ENCODE measurements at regions of chr10 and their contacts with region 1.

Region 1: GRCh38 chr10:85532773-85533172 is 833.8 kb downstream of the GRID1 start:
- DNase-seq: no peak
- H3K4me3 ChIP-seq: no peak overlapping the region
- H3K27ac ChIP-seq: no peak overlapping the region
- H3K4me1 ChIP-seq: peaks cover 21% of the 10 kb centered on the region
- H3K27me3 ChIP-seq: no peaks in the 10 kb centered on the region
- CTCF ChIP-seq: no peak

Region 2: GRCh38 chr10:85250304-85250703 is 282.5 kb before region 1 on chr10:
- dilution Hi-C with region 1: no loop called
- DNase-seq: no peak
- H3K4me3 ChIP-seq: no peak overlapping the region
- H3K27ac ChIP-seq: no peak overlapping the region
- H3K4me1 ChIP-seq: no peaks in the 10 kb centered on the region
- H3K27me3 ChIP-seq: no peaks in the 10 kb centered on the region
- CTCF ChIP-seq: no peak

Region 3: DNA sequence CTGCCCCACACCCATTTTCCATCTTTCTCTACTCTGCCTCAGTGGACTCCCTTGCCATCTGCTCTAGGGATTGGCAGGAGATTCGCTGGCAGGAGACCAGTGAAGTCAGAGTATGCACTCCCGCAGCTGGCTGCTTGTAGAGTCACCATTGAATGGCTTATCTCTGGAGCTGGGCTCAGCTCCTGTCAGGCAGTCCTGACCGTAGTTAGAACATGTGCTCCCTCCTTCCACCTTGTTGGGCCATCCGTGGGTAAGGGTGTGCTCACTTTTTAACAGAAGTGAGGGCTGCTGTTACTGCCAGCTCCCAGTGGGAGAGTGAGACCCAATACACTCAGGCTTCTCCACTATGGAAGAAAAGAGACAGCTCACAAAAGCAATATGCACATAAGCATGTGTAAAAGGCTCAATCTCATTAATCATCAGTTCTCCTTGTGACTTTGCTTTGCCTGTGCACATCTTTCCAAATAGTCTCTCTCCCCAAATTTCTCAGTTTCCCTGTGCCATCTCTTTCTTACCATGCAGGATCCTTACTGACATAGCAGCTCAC is 60.5 kb after region 1 on chr10:
- dilution Hi-C with region 1: no loop called
- DNase-seq: no peak
- H3K4me3 ChIP-seq: no peak overlapping the region
- H3K27ac ChIP-seq: no peak overlapping the region
- H3K4me1 ChIP-seq: no peaks in the 10 kb centered on the region
- H3K27me3 ChIP-seq: no peaks in the 10 kb centered on the region
- CTCF ChIP-seq: no peak

Region 4: DNA sequence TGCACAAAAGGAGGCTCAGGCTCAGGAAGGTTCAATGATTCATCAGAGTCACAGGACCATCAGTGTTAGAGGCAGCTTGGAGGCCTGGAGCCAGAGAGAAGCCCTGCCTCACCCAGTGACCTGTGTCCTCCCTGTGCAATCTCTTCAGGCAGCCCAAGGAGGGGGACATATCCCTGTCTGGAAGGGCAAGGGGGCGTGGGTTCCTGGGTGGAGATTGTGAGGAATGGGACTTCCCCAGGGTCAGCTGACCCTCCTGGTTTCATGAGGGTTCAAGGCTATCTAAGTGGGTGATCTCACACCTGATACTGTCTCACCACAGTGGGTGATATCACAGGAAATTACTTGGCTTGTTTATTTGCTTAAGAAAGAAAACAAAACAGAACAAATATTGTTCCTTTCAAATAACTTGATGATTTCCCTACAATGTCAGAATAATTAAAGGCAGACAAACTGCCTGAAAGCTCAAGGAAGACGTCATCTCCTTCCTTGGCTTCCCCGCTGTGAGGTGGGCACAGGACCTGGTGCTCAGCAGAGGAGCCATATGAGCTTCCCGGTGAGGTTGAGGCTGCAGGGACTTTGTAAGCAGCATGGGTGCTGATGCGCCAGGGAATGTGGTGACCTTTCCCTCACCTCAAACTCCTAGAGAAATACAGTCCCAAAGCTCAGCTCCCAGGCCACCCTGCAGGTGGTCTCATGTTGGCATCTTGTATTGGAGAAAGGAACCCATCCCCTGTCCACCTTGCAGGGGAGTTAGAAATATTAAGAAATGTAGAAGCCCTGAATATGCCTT is 70.6 kb after region 1 on chr10:
- dilution Hi-C with region 1: no loop called
- DNase-seq: no peak
- H3K4me3 ChIP-seq: no peak overlapping the region
- H3K27ac ChIP-seq: no peak overlapping the region
- H3K4me1 ChIP-seq: no peaks in the 10 kb centered on the region
- H3K27me3 ChIP-seq: no peaks in the 10 kb centered on the region
- CTCF ChIP-seq: no peak

Region 5: GRCh38 chr10:86389441-86390193 is 856.8 kb after region 1 on chr10:
- dilution Hi-C with region 1: loop called (anchors 10 kb)
- DNase-seq: no peak
- H3K4me3 ChIP-seq: no peak overlapping the region
- H3K27ac ChIP-seq: no peak overlapping the region
- H3K4me1 ChIP-seq: peaks cover 10% of the 10 kb centered on the region
- H3K27me3 ChIP-seq: peaks cover 16% of the 10 kb centered on the region
- CTCF ChIP-seq: no peak

Measured in keratinocyte (primary cell).